ENCODE measurements at regions of chr7 and their contacts with region 1.

Region 1: GRCh38 chr7:130010689-130011412 is 40.3 kb downstream of the ZC3HC1 start:
- DNase-seq: peak; percentile 91
- ATAC-seq: peak; percentile 79

Region 2: GRCh38 chr7:129825496-129826267 is 185.2 kb before region 1 on chr7:
- intact Hi-C with region 1: loop called (anchors 10 kb)
- DNase-seq: peak; percentile 96
- ATAC-seq: peak; percentile 88

Region 3: GRCh38 chr7:131400833-131401593 is 1390.2 kb after region 1 on chr7:
- intact Hi-C with region 1: no loop called
- DNase-seq: no peak
- ATAC-seq: peak; percentile 92